Breast epithelium (tissue), 4 donors: ENCODE measurements at regions of chr10 and their contacts with region 1.

Region 1: GRCh38 chr10:95889830-95890229 is 17.9 kb upstream of the CC2D2B start:
- DNase-seq: no peak
- H3K4me3 ChIP-seq: no peak overlapping the region
- H3K27ac ChIP-seq: no peak overlapping the region
- H3K4me1 ChIP-seq: no peaks in the 10 kb centered on the region
- H3K27me3 ChIP-seq: no peaks in the 10 kb centered on the region
- CTCF ChIP-seq: no peak
- POLR2A ChIP-seq: no peak

Region 2: GRCh38 chr10:95814011-95814727 is 75.7 kb before region 1 on chr10:
- intact Hi-C with region 1: no loop called
- DNase-seq: no peak
- H3K4me3 ChIP-seq: peak overlapping the region in 1 of 3 donors; percentile 15
- H3K27ac ChIP-seq: peak overlapping the region; percentile 41 to 77
- H3K4me1 ChIP-seq: peaks cover 0 to 2% of the 10 kb centered on the region in 2 donors
- H3K27me3 ChIP-seq: no peaks in the 10 kb centered on the region
- CTCF ChIP-seq: no peak
- POLR2A ChIP-seq: no peak

Region 3: DNA sequence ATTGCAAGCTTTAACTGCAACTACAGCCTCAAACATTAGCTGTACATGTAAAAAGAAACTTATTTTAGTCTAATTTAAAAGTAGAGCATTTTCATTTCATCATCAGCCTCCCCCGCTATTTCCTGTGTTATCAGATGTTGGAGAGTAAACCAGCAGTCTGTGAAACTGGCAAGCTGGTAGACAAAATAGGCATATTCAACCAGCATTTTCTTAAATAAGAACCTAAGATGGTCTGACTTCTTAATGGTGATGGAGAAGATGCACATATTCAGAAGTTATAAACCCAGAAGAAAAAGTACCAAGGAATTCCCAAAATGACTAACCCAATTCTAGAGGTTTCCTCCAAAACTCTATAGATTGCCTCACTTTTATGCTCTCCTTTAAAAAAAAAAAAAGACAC is 805.5 kb after region 1 on chr10:
- intact Hi-C with region 1: loop called (anchors 5 kb)
- DNase-seq: no peak
- H3K4me3 ChIP-seq: no peak overlapping the region
- H3K27ac ChIP-seq: no peak overlapping the region
- H3K4me1 ChIP-seq: no peaks in the 10 kb centered on the region
- H3K27me3 ChIP-seq: no peaks in the 10 kb centered on the region
- CTCF ChIP-seq: no peak
- POLR2A ChIP-seq: no peak